ENCODE measurements at regions of chr6 and their contacts with region 1.

Region 1: DNA sequence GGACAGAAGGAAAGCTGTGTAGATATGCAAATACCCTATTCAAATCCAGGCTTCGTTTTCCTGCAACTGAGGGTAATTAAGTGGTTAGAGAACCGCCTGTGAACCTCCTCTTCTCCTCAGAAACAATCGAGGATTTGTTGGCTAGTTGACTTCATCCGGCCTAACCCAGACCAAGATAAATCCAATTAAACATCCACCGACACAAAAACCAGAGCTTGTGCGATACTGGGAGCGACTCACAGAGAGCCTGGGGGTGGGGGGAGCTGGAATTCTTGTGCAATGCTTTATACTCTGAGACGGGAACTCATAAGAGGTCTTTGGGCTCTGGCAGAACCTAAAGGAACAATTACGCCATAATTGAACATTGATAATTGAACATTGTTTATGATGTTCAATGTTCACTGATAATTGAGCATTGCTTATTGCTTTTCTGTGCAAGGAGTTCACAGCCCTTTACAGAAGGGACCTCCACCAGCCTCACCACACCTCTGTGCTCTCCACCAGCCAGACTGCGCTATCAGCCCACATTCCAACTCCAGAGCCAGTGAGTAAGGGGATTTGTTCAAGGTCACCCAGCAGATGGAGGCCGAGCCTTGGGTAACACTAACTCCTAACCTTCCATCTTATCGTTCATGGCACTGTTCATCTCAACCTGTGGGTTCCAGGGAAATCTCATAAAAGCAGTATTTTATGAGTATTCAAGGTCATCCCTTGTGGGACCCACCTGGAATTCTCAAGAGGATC is 429.6 kb upstream of the JARID2 start:
- DNase-seq: no peak
- H3K4me3 Mint-ChIP-seq: no peak overlapping the region
- H3K27ac Mint-ChIP-seq: no peak overlapping the region
- H3K4me1 Mint-ChIP-seq: peaks cover 22% of the 10 kb centered on the region
- H3K27me3 Mint-ChIP-seq: no peaks in the 10 kb centered on the region

Region 2: DNA sequence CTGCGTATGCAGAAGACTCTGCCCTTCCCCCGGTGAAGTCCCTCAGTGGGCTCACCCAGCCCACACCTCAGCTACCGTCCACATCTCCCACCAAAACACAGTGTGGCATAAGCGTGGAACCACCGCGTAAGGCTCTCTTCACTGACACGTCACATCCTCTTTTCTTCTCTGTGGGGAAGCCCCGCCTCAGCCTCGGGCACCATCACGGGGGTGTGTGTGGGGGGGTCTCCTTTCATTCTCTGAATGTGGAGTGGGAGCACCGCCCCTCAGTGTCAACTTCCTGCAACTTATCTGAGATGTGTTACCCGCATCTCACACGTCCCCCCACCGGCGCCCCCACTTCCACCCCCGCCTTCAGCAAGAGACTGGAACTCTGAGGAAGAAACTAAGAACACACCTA is 41.2 kb after region 1 on chr6:
- CTCF ChIA-PET with region 1: no interaction called
- POLR2A ChIA-PET with region 1: interaction called, 9 read pairs
- intact Hi-C with region 1: loop called (anchors 1 kb)
- DNase-seq: peak; percentile 84
- H3K4me3 Mint-ChIP-seq: peak overlapping the region; percentile 56
- H3K27ac Mint-ChIP-seq: peak overlapping the region; percentile 95
- H3K4me1 Mint-ChIP-seq: peaks cover 48% of the 10 kb centered on the region
- H3K27me3 Mint-ChIP-seq: no peaks in the 10 kb centered on the region

Measured in activated CD4-positive, alpha-beta memory T cell treated with anti-CD3 and anti-CD28 coated beads for 36 hours (primary cell).